Gastrocnemius medialis (tissue), 4 donors: ENCODE measurements at regions of chr20 and their contacts with region 1.

Region 1: DNA sequence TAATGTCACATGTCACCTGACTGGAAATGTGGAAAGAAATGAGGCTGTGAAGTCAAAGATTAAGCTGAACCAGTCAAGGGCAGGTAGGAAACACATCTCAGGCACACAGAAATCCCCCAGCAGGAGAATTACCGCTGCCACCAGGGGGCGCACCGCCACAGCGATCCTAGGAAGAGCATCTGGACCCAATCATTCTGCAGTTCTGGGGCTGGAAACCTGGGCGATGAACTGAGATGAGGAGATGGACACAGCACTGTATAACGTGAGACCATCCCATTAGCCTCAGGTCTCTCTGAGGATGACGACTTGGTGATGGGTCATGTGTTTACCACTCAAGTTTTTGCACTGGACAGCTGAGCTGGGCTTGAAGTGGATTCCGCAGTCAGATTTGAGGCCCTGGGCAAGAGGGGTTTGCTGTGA is 6.5 kb upstream of the SLC24A3 start:
- DNase-seq: peak; percentile 23 to 58
- ATAC-seq: peak; percentile 47 to 75
- H3K4me3 ChIP-seq: no peak overlapping the region
- H3K27ac ChIP-seq: no peak overlapping the region
- H3K4me1 ChIP-seq: no peaks in the 10 kb centered on the region
- H3K27me3 ChIP-seq: no peaks in the 10 kb centered on the region
- CTCF ChIP-seq: peak; percentile 68 to 90 (median 87)
- POLR2A ChIP-seq: no peak

Region 2: GRCh38 chr20:19079536-19080299 is 126.3 kb before region 1 on chr20:
- in situ Hi-C with region 1: no loop called
- intact Hi-C with region 1: no loop called
- DNase-seq: no peak
- ATAC-seq: no peak
- H3K4me3 ChIP-seq: no peak overlapping the region
- H3K27ac ChIP-seq: no peak overlapping the region
- H3K4me1 ChIP-seq: no peaks in the 10 kb centered on the region
- H3K27me3 ChIP-seq: no peaks in the 10 kb centered on the region
- CTCF ChIP-seq: no peak
- POLR2A ChIP-seq: no peak

Region 3: DNA sequence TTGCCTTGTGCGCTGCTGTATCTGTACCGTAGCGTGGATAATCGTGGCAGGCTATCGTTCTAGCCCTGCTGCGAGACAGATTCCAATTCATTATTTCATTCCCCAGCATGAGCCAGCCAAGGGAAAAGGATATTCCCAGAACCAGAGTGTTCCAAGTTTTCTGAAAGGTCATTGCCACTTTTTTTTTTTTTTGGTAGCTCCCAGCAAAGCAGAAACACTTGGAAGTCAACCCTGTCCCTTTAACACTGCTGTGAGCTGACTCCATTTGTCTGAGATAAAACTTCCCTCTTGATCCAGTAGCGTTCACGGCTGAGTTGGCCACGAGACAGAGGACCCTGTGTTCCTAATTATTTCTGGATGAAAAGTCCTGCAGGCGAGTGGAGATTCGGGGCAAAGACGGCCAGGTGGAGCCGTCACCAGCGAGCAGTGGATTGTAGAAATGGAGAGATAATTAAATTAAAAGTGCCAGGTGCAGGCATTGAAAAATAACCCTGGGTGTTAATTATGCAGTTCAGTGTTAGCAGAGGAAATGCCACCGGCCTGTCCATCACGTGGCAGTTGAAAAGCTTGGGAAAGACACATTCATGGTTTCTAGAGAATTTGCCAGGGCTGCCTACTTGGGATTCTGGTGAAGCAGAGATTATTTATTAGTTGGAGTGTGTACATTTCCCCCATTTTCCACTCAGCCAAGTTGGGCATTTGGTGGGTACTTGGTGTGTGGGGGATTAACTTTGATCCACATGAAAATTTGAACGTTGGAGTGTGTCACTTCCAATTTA is 170.7 kb after region 1 on chr20:
- in situ Hi-C with region 1: no loop called
- intact Hi-C with region 1: loop called (anchors 10 kb)
- DNase-seq: no peak
- ATAC-seq: peak; percentile 53 to 60
- H3K4me3 ChIP-seq: peak overlapping the region; percentile 24 to 56 (median 39)
- H3K27ac ChIP-seq: peak overlapping the region in 3 of 4 donors; percentile 11 to 32 (median 20)
- H3K4me1 ChIP-seq: peaks cover 8 to 14% of the 10 kb centered on the region in 2 donors
- H3K27me3 ChIP-seq: no peaks in the 10 kb centered on the region
- CTCF ChIP-seq: no peak
- POLR2A ChIP-seq: no peak

Region 4: DNA sequence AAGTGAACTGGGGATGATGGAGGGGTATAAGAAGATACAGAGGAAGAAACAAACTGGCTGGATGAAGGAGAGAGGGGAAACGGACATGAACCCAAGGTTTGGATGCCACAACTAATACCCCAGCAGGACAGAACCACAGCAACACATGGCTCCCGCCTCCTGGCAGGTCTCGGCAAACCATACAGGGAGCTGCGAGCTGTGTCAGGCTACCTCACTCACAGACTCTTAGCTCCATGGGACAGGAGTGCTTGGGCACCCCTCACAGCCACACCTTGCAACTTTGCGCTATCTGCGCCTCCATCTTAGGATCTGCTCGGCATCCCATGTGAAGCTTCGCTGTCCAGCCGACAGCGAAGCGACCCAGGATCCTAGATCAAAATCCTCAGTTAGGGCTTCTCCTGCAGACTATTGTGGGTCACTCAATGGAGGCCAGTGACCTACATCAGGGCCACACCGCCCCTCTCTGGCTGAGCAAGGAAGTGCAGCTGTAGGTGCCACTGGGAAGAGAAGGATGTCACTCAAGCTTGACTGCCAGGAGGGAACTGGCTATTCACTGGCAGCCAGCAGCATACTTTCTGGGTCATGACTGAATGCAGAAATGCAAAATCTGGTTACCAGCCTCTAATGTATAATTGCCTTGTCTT is 377.7 kb after region 1 on chr20:
- in situ Hi-C with region 1: loop called (anchors 5 kb)
- intact Hi-C with region 1: loop called (anchors 1 kb)
- DNase-seq: peak; percentile 24 to 73
- ATAC-seq: peak; percentile 81 to 95
- H3K4me3 ChIP-seq: no peak overlapping the region
- H3K27ac ChIP-seq: no peak overlapping the region
- H3K4me1 ChIP-seq: no peaks in the 10 kb centered on the region
- H3K27me3 ChIP-seq: no peaks in the 10 kb centered on the region
- CTCF ChIP-seq: peak; percentile 74 to 89 (median 80)
- POLR2A ChIP-seq: no peak